H1 (cell line): ENCODE measurements at regions of chr5 and their contacts with region 1.

Region 1: DNA sequence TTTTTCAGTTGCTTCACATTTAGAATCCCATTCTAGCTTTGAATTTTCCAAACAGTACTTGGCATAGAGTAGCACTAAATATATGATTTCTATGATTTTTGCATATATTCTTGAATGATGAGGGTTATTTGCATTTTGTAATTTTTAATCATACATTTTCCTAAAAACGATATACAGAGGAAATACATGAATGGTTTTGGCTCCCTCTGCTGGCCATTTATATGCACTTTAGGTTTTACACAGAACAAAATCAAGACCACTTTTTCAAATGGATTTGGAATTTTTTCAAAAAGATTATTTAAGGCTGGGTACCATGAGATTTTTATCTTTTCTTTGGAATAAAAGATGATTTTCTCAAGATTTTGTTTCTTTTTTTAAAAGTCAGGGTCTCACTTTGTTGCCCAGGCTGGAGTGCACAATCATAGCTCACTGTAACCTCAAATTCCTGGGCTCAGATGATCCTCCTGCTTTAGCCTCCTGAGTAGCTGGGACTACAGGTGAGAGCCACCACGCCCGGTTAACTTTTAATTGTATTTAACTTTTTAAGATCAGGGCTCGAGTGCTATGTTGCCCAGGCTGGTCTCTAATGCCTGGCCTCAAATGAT is 16.7 kb upstream of the COMMD10 start:
- DNase-seq: no peak
- H3K4me3 ChIP-seq: no peak overlapping the region
- H3K27ac ChIP-seq: no peak overlapping the region
- H3K4me1 ChIP-seq: no peaks in the 10 kb centered on the region
- H3K27me3 ChIP-seq: peaks cover 0 to 2% (median 0%) of the 10 kb centered on the region in 4 experiments; a peak in 1 of 7 replicates
- CTCF ChIP-seq: peak in 2 of 3 experiments; percentile 33 to 54; a peak in 2 of 4 replicates
- EP300 ChIP-seq: no peak
- POLR2A ChIP-seq: no peak
- RAD21 ChIP-seq: peak; percentile 66 to 78

Region 2: DNA sequence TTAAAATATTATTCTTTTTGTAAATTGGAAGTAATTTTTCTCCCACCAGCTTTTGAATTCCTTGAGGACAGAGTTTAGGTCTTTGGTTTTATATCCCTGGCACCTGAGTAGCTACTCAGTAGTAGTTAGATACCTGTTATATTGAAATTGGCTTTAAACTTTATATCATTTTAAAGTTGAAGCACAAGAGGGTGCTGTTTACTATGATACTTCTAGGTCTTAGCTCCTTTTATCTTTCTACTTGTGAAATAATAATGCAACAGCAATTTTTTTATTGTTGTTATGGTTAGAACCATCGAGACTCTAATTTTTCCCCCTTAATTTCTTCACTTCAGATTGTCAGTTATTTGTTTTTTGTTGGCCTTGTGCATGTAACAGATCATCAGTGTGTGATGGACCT is 180.1 kb before region 1 on chr5:
- CTCF ChIA-PET with region 1: interaction called, 21 read pairs
- POLR2A ChIA-PET with region 1: no interaction called
- DNase-seq: no peak
- H3K4me3 ChIP-seq: no peak overlapping the region
- H3K27ac ChIP-seq: no peak overlapping the region
- H3K4me1 ChIP-seq: no peaks in the 10 kb centered on the region
- H3K27me3 ChIP-seq: no peaks in the 10 kb centered on the region
- CTCF ChIP-seq: peak in 1 of 3 experiments; percentile 4; a peak in 1 of 4 replicates
- EP300 ChIP-seq: no peak
- POLR2A ChIP-seq: no peak
- RAD21 ChIP-seq: peak in 1 of 2 experiments; percentile 38; a peak in 3 of 4 replicates

Region 3: DNA sequence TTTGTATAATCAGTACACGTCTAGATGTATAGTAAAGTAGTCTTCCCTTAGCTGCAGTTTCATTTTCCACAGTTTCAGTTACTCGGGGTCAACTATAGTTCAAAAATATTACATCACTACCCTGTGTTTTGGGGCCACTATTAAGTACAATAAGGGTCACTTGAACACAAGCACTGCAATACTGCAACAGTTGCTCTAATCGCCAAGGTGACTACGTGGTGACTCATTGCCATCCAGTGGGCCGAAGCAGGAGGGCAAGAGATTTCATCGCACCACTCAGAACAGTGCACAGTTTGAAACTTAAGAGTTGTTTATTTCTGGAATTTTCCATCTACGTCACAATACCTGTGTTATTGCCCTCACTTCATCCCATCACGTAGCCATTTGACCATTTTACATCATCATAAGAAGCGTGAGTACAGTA is 36.0 kb before region 1 on chr5 and contains the start of gene ARL14EPL:
- CTCF ChIA-PET with region 1: interaction called, 15 read pairs
- POLR2A ChIA-PET with region 1: no interaction called
- DNase-seq: peak in 1 of 2 experiments; percentile 15
- H3K4me3 ChIP-seq: no peak within 1 kb of the TSS
- H3K27ac ChIP-seq: no peak within 1 kb of the TSS
- H3K4me1 ChIP-seq: no peaks in the 10 kb centered on the region
- H3K27me3 ChIP-seq: no peaks in the 10 kb centered on the region; a peak in 1 of 7 replicates
- CTCF ChIP-seq: peak; percentile 46 to 51 (median 49)
- EP300 ChIP-seq: no peak
- POLR2A ChIP-seq: no peak
- RAD21 ChIP-seq: peak; percentile 70 to 78
- total RNA-seq, gene ARL14EPL: not detected in 2 replicates

Region 4: DNA sequence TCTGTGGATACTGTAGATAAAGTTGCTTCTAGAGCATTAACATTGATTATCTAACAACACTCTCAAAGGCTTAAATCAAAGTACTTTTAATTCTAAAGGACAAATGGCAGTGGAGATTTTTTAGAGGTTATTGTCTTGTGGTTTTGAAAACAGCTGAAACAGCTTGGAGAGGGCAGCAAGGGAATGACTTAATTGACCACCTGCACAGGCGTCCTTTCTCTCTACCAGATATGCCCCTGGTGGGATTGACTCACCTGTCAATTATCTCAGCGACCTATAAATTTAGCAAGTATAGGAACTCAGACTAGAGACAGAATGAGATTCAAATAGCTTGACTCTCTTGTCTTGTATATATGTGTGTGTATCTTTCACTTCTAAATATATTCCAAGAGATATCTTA is 22.3 kb before region 1 on chr5:
- CTCF ChIA-PET with region 1: interaction called, 10 read pairs
- POLR2A ChIA-PET with region 1: no interaction called
- DNase-seq: no peak
- H3K4me3 ChIP-seq: no peak overlapping the region
- H3K27ac ChIP-seq: no peak overlapping the region
- H3K4me1 ChIP-seq: no peaks in the 10 kb centered on the region
- H3K27me3 ChIP-seq: no peaks in the 10 kb centered on the region
- CTCF ChIP-seq: no peak
- EP300 ChIP-seq: no peak
- POLR2A ChIP-seq: no peak
- RAD21 ChIP-seq: no peak